ENCODE measurements at regions of chr6 and their contacts with region 1.

Region 1: GRCh38 chr6:15621203-15622044 is 41.4 kb downstream of the DTNBP1 start:
- DNase-seq: peak; percentile 41 to 81 (median 76)
- ATAC-seq: peak; percentile 85 to 93
- H3K4me3 ChIP-seq: no peak overlapping the region
- H3K27ac ChIP-seq: peak overlapping the region; percentile 97
- H3K4me1 ChIP-seq: peaks cover 2% of the 10 kb centered on the region
- H3K27me3 ChIP-seq: no peaks in the 10 kb centered on the region

Region 2: DNA sequence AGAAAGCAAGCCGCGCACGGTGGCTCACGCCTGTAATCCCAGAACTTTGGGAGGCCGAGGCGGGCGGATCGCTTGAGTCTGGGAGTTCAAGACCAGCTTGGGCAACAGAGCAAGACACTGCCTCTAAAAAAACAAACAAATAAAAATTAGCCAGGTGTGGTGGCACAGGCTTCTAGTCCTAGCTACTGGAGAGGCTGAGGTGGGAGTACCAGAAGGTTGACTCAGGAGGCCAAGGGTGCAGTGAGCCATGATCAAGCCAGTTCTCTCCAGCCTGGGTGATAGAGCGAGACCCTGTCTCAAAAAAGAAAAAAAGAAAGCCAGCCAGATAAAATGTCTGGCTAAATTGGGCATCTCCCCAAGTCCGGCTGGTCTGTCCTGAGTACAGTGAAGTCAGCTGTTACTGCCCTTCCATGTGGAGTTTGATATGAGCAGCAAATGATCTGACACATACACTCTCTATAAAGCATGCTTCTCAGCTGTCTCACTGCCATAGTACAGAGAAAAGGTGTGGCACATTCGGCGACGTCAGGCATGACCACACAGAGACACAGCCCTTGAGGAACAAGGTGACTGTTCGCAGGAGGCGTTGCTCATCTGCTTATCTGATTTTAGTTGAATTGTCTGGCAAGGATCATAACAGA is 1490.9 kb before region 1 on chr6:
- intact Hi-C with region 1: loop called in 1 of 4 experiments (anchors 10 kb)
- DNase-seq: no peak
- ATAC-seq: no peak
- H3K4me3 ChIP-seq: no peak overlapping the region
- H3K27ac ChIP-seq: no peak overlapping the region
- H3K4me1 ChIP-seq: no peaks in the 10 kb centered on the region
- H3K27me3 ChIP-seq: no peaks in the 10 kb centered on the region

Region 3: DNA sequence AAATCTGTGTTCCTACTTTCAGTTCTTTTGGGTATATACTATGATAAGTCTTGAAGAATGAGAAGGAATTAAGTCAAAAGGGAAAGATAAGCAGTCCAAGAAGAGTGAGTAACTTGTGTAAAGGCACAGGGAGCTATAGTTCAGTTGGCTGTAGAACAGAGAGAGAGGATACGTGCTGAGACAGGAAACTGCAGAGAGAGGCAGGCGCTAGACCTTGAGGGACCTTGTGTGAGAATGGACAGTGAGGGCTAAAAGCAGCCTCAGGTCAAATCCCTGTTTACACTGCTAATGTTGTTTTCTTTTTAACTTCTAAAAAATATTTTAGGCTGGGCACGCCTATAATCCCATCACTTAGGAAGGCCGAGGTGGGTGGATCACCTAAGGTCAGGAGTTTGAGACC is 442.1 kb before region 1 on chr6:
- intact Hi-C with region 1: no loop called
- DNase-seq: no peak
- ATAC-seq: no peak
- H3K4me3 ChIP-seq: no peak overlapping the region
- H3K27ac ChIP-seq: no peak overlapping the region
- H3K4me1 ChIP-seq: no peaks in the 10 kb centered on the region
- H3K27me3 ChIP-seq: no peaks in the 10 kb centered on the region

Region 4: DNA sequence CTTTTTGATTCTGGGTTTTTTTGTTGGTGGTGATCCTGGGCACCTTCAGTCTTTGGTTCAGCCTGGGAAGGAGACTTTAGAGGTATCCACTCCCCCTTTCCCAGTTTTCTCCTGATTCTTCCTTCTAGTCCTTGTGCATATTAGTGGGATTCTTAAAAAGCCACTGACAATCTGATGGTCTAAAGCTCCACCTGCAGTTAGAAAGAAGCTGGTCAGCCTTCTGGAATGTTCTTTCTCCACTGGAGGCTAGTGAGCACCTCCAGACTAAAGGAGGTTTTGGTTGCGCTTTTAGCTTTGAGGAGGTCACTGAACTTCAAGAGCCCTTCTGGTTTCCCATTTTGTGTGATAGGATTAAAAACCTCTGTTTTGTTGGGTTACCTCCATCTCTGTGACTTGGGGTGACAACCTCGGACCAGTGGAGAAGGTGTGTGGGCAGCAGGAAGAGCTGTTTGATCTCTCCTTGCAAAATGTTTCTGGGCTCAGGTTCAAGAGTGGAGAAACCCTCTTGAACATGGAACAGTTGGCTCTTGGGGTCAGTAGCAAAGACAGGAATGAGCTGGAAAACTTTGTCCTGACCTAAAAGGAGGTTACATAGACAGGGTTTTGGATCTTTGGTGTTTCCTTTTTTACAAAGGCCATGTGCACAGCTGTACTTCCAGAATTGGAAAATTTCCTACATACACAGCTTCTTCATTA is 346.6 kb before region 1 on chr6:
- intact Hi-C with region 1: no loop called
- DNase-seq: no peak
- ATAC-seq: peak; percentile 34
- H3K4me3 ChIP-seq: no peak overlapping the region
- H3K27ac ChIP-seq: no peak overlapping the region
- H3K4me1 ChIP-seq: no peaks in the 10 kb centered on the region
- H3K27me3 ChIP-seq: no peaks in the 10 kb centered on the region

Region 5: GRCh38 chr6:15504581-15505350 is 116.7 kb before region 1 on chr6:
- intact Hi-C with region 1: loop called in 2 of 4 experiments (anchors 10 kb)
- DNase-seq: peak; percentile 75 to 90 (median 86)
- ATAC-seq: peak; percentile 82 to 84
- H3K4me3 ChIP-seq: peak overlapping the region; percentile 8
- H3K27ac ChIP-seq: peak overlapping the region; percentile 75
- H3K4me1 ChIP-seq: peaks cover 18% of the 10 kb centered on the region
- H3K27me3 ChIP-seq: no peaks in the 10 kb centered on the region

Region 6: GRCh38 chr6:15512126-15512525 is 109.3 kb before region 1 on chr6:
- intact Hi-C with region 1: loop called in 3 of 4 experiments (anchors 10 kb)
- DNase-seq: peak in 1 of 3 donors; percentile 67
- ATAC-seq: peak; percentile 54 to 56
- H3K4me3 ChIP-seq: no peak overlapping the region
- H3K27ac ChIP-seq: peak overlapping the region; percentile 50
- H3K4me1 ChIP-seq: no peaks in the 10 kb centered on the region
- H3K27me3 ChIP-seq: no peaks in the 10 kb centered on the region